Spleen (tissue), 13 donors: ENCODE measurements at regions of chr9 and their contacts with region 1.

Region 1: GRCh38 chr9:74952281-74953151 is at the start of gene C9orf40:
- DNase-seq: peak; percentile 100
- H3K4me3 ChIP-seq: peak within 1 kb of the TSS; percentile 71 to 93 (median 80)
- H3K27ac ChIP-seq: peak within 1 kb of the TSS; percentile 97 to 99 (median 98)
- H3K4me1 ChIP-seq: peaks cover 0 to 36% (median 5%) of the 10 kb centered on the region in 6 donors
- H3K27me3 ChIP-seq: no peaks in the 10 kb centered on the region
- CTCF ChIP-seq: peak; percentile 56 to 96 (median 91)
- POLR2A ChIP-seq: no peak
- total RNA-seq, gene C9orf40: 4.0 to 6.5 (median 5.0) TPM

Region 2: DNA sequence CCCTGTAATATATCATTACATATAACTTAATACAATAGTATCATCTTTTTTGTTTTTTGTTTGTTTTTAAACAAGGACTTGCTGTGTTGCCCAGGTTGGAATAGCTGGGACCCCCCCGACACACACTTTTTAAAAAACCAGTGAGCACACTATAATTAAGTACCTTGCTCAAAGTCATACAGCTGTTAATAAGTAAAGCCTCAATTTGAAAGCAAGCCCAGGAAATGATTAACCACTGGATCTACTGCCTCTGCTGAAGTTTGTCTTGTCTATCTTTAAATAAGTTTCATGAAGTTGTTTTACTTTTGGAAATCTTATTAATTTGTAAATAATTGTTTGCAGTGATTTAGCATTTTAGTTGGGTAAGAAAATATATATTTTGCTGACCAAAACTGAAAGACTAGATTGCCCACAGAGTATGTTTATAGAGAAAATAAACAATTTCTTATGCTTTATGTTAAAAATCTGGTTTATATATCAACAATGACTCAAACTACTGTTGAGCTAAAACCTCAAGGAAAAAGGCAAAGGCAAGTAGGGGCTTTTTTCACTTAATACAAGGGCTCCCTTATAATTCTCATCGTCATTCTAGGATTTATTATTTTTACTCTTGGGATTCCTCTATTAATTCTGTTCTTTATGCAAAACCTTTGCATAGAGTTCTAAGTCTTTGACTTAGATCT is 81.4 kb after region 1 on chr9:
- intact Hi-C with region 1: loop called (anchors 10 kb)
- DNase-seq: no peak
- H3K4me3 ChIP-seq: no peak overlapping the region
- H3K27ac ChIP-seq: no peak overlapping the region
- H3K4me1 ChIP-seq: peaks cover 0 to under 1% (median 0%) of the 10 kb centered on the region in 6 donors
- H3K27me3 ChIP-seq: no peaks in the 10 kb centered on the region
- CTCF ChIP-seq: no peak
- POLR2A ChIP-seq: no peak

Region 3: GRCh38 chr9:75053869-75054268 is 101.4 kb after region 1 on chr9:
- intact Hi-C with region 1: no loop called
- DNase-seq: no peak
- H3K4me3 ChIP-seq: no peak overlapping the region
- H3K27ac ChIP-seq: peak overlapping the region in 2 of 8 donors; percentile 3 to 23
- H3K4me1 ChIP-seq: peaks cover 0 to 16% (median 0%) of the 10 kb centered on the region in 6 donors
- H3K27me3 ChIP-seq: no peaks in the 10 kb centered on the region
- CTCF ChIP-seq: no peak
- POLR2A ChIP-seq: no peak

Region 4: DNA sequence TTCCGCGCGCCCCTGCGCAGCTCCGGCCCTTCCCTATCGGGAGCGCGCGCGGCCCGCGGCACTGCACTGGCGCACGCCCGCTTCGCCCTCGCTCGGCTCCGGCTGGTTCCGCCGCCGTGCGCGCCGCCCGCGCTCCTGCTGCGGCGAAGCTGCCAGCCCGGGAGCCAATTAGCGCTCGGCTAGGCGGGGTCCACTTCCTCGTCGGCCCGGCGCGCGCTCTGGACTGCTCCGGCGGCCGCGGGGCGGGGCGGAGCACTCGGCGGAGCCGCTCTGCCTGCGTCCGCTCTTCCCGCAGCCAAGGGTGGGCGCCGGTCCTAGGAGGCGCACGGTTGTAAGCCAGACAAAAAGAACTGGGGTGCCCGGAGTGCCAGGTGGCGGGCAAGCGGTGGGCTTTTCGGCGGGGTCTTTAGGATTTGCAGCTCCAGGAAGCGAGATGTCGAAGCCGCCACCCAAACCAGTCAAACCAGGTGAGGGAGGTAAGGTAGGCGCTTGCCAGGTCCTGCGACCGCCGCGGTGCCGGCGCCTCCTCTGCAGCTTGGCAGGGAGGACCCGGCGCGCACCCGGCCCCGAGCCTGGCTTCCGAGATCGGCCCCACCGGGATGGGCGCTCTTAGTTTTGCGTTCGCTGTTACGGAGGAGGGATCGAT is 135.9 kb after region 1 on chr9 and contains the start of gene OSTF1:
- intact Hi-C with region 1: loop called (anchors 5 kb)
- DNase-seq: peak; percentile 100
- H3K4me3 ChIP-seq: peak within 1 kb of the TSS; percentile 48 to 95 (median 88)
- H3K27ac ChIP-seq: peak within 1 kb of the TSS; percentile 94 to 100 (median 97)
- H3K4me1 ChIP-seq: peaks cover 35 to 84% (median 72%) of the 10 kb centered on the region in 6 donors
- H3K27me3 ChIP-seq: no peaks in the 10 kb centered on the region
- CTCF ChIP-seq: peak in 3 of 11 experiments; percentile 11 to 39 (median 28)
- POLR2A ChIP-seq: peak; percentile 82 to 95 (median 87)
- total RNA-seq, gene OSTF1: 76.4 to 123 (median 114) TPM